Gastrocnemius medialis (tissue), 4 donors: ENCODE measurements at regions of chr11 and their contacts with region 1.

Region 1: DNA sequence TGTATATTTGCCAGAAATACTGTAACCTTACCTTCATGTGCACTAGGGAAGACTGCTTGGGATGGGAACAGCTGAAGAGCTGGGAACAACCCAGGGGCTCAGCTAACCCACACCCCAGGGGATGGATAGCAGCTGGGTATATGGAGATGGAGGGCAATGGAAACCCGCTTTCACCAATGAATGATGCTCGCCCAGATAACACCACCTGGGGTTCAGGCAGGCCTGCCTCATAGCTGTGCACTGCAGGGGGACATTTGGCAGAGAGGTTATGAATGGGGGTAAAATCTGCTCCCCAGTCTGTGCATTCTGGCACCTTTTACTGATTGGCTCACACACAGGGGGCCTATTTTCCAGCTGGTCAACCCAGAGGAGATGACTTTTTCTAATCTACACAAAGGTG is 170.7 kb downstream of the CHST1 start:
- DNase-seq: no peak
- ATAC-seq: no peak
- H3K4me3 ChIP-seq: no peak overlapping the region
- H3K27ac ChIP-seq: no peak overlapping the region
- H3K4me1 ChIP-seq: no peaks in the 10 kb centered on the region
- H3K27me3 ChIP-seq: peaks cover 0 to 16% (median 3%) of the 10 kb centered on the region in 3 donors
- CTCF ChIP-seq: no peak
- POLR2A ChIP-seq: no peak

Region 2: GRCh38 chr11:45444796-45445195 is 49.9 kb before region 1 on chr11:
- in situ Hi-C with region 1: no loop called
- intact Hi-C with region 1: loop called (anchors 10 kb)
- DNase-seq: no peak
- ATAC-seq: no peak
- H3K4me3 ChIP-seq: no peak overlapping the region
- H3K27ac ChIP-seq: no peak overlapping the region
- H3K4me1 ChIP-seq: no peaks in the 10 kb centered on the region
- H3K27me3 ChIP-seq: peaks cover 0 to 12% (median 8%) of the 10 kb centered on the region in 3 donors
- CTCF ChIP-seq: no peak
- POLR2A ChIP-seq: no peak